ENCODE measurements at regions of chr7 and their contacts with region 1.

Region 1: GRCh38 chr7:150962553-150963399 is 15.3 kb downstream of the KCNH2 start:
- DNase-seq: peak; percentile 36
- ATAC-seq: peak; percentile 94
- H3K4me3 Mint-ChIP-seq: no peak overlapping the region
- H3K27ac Mint-ChIP-seq: no peak overlapping the region
- H3K4me1 Mint-ChIP-seq: no peaks in the 10 kb centered on the region
- H3K27me3 Mint-ChIP-seq: peaks cover 45% of the 10 kb centered on the region
- CTCF ChIP-seq: no peak

Region 2: DNA sequence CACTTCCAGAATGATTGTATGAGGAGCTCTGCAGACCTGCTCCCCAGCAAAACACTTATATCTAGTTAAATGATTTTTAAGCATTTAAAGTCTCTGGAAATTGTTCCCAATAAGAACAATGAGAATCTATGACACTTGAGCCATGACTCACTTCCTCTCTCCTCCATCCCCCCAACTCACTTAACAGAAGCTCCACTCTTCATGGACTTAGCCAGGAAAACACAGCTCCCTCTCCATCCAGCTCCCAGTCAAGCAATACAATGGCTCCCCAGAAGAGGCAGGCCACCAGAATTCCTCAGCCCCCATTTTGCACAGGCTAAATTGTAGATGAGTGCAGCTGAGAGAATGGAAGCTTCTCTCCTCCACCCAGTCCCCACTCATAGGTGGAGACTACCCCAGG is 83.4 kb before region 1 on chr7:
- CTCF ChIA-PET with region 1: no interaction called
- POLR2A ChIA-PET with region 1: no interaction called
- intact Hi-C with region 1: no loop called
- DNase-seq: no peak
- ATAC-seq: no peak
- H3K4me3 Mint-ChIP-seq: no peak overlapping the region
- H3K27ac Mint-ChIP-seq: no peak overlapping the region
- H3K4me1 Mint-ChIP-seq: peaks cover 6% of the 10 kb centered on the region
- H3K27me3 Mint-ChIP-seq: peaks cover 8% of the 10 kb centered on the region
- CTCF ChIP-seq: no peak

Region 3: GRCh38 chr7:150941981-150942590 is 20.7 kb before region 1 on chr7:
- CTCF ChIA-PET with region 1: no interaction called
- POLR2A ChIA-PET with region 1: no interaction called
- intact Hi-C with region 1: no loop called
- DNase-seq: no peak
- ATAC-seq: no peak
- H3K4me3 Mint-ChIP-seq: no peak overlapping the region
- H3K27ac Mint-ChIP-seq: no peak overlapping the region
- H3K4me1 Mint-ChIP-seq: peaks cover 5% of the 10 kb centered on the region
- H3K27me3 Mint-ChIP-seq: peaks cover 17% of the 10 kb centered on the region
- CTCF ChIP-seq: no peak

Region 4: GRCh38 chr7:151008511-151009323 is 45.9 kb after region 1 on chr7:
- CTCF ChIA-PET with region 1: interaction called, 12 read pairs
- POLR2A ChIA-PET with region 1: no interaction called
- intact Hi-C with region 1: loop called (anchors 2 kb)
- DNase-seq: peak; percentile 67
- ATAC-seq: peak; percentile 61
- H3K4me3 Mint-ChIP-seq: peak overlapping the region; percentile 52
- H3K27ac Mint-ChIP-seq: no peak overlapping the region
- H3K4me1 Mint-ChIP-seq: peaks cover 20% of the 10 kb centered on the region
- H3K27me3 Mint-ChIP-seq: peaks cover 2% of the 10 kb centered on the region
- CTCF ChIP-seq: no peak

Measured in activated B cell treated with CpG ODN at 0.5 μM for 24 hours (primary cell).